Right ventricle myocardium inferior (tissue), 1 donor: ENCODE measurements at regions of chr21 and their contacts with region 1.

Region 1: GRCh38 chr21:28215214-28215954 is 777.3 kb downstream of the LTN1 start:
- DNase-seq: no peak
- ATAC-seq: peak; percentile 97

Region 2: DNA sequence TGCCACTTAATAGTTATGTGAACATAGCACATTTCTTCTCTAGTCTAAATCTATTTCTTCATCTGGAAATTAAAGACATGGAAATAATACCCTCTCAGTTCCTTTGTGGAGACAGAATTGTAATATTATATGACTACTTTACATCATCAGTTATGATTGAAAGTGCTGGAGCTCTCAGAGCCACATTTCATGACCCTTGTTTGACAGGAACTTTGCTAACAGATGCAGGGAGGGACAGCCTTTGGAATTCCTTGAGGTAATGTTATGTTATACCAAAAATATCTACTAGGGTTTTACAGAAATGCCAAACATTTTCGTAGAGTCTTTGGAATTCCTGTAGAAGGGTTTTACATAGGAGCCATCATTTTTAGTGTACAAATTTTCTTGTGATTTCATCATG is 1191.1 kb before region 1 on chr21:
- intact Hi-C with region 1: no loop called
- DNase-seq: no peak
- ATAC-seq: no peak

Region 3: GRCh38 chr21:28099001-28099705 is 116.2 kb before region 1 on chr21:
- intact Hi-C with region 1: loop called (anchors 2 kb)
- DNase-seq: peak; percentile 74
- ATAC-seq: peak; percentile 99

Region 4: GRCh38 chr21:28111151-28111619 is 104.2 kb before region 1 on chr21:
- intact Hi-C with region 1: loop called (anchors 5 kb)
- DNase-seq: no peak
- ATAC-seq: peak; percentile 99

Region 5: DNA sequence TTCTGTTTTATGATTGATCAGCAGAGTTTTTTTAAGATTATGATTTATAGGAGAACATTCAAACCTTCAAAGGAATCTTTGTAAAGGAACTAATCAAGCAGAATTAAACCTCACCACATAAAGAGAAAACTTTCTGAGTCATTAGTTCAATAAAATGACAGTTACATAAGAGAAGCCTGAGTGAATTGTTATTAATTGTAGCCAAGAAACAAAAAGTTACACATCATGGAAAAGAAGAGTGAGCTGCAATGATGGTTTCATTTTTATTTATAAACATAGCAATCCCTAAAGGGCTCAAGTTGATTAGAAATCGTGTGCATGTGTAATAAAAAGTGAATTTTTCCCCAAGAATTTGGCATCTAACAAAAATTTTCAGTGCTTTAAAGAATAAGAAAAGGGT is 45.9 kb after region 1 on chr21:
- intact Hi-C with region 1: no loop called
- DNase-seq: no peak
- ATAC-seq: no peak

Region 6: GRCh38 chr21:28283641-28284490 is 68.5 kb after region 1 on chr21:
- intact Hi-C with region 1: loop called (anchors 5 kb)
- DNase-seq: no peak
- ATAC-seq: peak; percentile 94

Region 7: DNA sequence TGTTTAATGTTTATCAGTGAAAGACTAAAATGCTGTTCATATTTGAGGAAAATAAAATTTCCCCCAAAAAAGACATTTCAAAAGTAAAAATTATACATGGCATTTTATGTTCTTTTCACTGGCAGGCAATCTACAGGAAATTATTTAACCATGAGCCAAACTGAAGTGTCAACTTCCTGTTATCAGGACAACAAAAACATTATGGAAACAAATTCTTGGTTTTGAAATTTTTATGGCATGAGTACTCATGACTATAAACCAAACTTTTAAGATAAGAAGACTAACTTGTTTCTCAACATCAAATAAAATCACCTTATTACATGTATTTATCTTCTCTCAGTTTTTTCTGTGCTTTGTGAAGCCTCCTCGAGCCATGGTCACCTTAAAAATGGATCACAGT is 78.7 kb after region 1 on chr21:
- intact Hi-C with region 1: no loop called
- DNase-seq: no peak
- ATAC-seq: no peak

Region 8: DNA sequence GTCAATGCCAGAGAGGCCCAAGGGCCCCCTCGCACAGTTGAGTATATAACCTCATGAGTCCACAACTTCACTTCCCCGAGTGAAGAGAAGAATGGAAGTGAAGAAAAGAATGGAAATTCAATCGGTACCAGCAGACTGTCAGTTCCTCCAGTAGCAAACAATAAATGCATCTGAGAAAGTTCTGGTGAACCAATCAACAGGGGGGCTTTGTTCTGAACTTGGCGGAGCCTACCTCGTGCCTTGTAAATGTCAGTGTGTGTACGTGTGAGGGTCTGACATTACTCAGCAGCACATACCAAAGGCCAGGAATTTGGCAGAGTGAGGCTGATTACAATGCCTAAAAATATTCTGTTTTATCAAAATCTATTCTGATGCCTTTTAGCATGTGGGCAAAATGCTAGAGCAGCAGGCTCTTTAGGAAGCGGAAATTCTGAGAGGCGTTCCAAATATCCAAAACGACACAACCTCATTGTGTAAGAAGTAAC is 538.8 kb after region 1 on chr21:
- intact Hi-C with region 1: loop called (anchors 10 kb)
- DNase-seq: peak; percentile 69
- ATAC-seq: peak; percentile 96